Colonic mucosa (tissue), 4 donors: ENCODE measurements at regions of chr12 and their contacts with region 1.

Region 1: GRCh38 chr12:100329800-100330199 is 27.1 kb upstream of the SLC17A8 start:
- DNase-seq: no peak
- H3K4me3 ChIP-seq: no peak overlapping the region
- H3K27ac ChIP-seq: no peak overlapping the region
- H3K4me1 ChIP-seq: no peaks in the 10 kb centered on the region
- H3K27me3 ChIP-seq: no peaks in the 10 kb centered on the region
- CTCF ChIP-seq: no peak

Region 2: GRCh38 chr12:100215209-100215608 is 114.6 kb before region 1 on chr12:
- intact Hi-C with region 1: loop called (anchors 10 kb)
- DNase-seq: no peak
- H3K4me3 ChIP-seq: no peak overlapping the region
- H3K27ac ChIP-seq: no peak overlapping the region
- H3K4me1 ChIP-seq: no peaks in the 10 kb centered on the region
- H3K27me3 ChIP-seq: no peaks in the 10 kb centered on the region
- CTCF ChIP-seq: no peak